ENCODE measurements at regions of chr12 and their contacts with region 1.

Region 1: GRCh38 chr12:121678716-121679580 is 9.5 kb upstream of the MORN3 start:
- DNase-seq: peak in 1 of 5 donors; percentile 55
- H3K4me3 ChIP-seq: no peak overlapping the region
- H3K27ac ChIP-seq: no peak overlapping the region
- H3K4me1 ChIP-seq: no peaks in the 10 kb centered on the region
- H3K27me3 ChIP-seq: no peaks in the 10 kb centered on the region
- CTCF ChIP-seq: no peak
- EP300 ChIP-seq: no peak
- POLR2A ChIP-seq: no peak

Region 2: GRCh38 chr12:121452340-121452984 is 226.5 kb before region 1 on chr12:
- intact Hi-C with region 1: no loop called
- DNase-seq: peak in 3 of 5 donors; percentile 35 to 52 (median 52)
- H3K4me3 ChIP-seq: peak overlapping the region; percentile 13
- H3K27ac ChIP-seq: peak overlapping the region; percentile 53 to 60
- H3K4me1 ChIP-seq: peaks cover 13% of the 10 kb centered on the region
- H3K27me3 ChIP-seq: no peaks in the 10 kb centered on the region
- CTCF ChIP-seq: no peak
- EP300 ChIP-seq: no peak
- POLR2A ChIP-seq: no peak

Region 3: DNA sequence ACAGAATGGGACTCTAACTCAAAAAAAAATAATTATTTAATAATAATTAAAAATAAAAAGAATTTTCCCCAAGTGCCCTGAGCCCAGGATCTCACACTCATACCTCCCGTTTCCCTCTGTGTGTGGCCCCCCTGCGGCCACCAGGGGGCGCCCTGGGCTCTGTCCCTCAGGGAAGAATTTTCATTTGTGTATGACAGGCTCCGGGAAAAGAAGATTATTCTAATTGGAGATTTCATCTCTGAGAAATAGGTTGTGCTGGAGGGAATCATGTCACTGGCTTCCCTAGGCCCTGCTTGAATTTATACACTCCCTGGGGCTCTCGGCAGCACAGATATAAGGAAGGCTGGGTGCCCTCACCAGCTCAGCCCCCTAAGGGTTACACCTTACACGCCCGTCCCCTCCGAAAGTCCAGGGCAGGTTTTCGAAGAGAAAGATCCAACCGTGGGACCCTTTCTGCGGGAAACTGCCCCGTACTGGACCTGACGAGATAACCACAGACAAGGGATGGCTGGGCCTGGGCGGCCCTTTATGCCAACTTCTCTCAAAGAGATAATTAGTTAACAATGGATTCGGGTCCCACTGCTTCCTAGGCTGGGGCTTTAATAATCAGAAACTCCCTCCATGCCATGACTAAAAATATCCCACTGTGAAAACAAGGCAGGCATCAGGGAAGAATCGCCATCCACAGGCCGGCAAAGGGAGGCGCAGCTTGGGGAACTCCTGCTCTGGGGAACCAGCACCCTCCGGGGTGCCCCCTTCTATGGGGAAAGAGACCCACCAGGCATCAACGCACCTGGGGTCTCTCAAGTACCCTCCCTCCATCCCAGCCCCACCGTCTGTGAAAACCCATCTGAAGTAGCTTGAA is 178.8 kb before region 1 on chr12:
- intact Hi-C with region 1: loop called (anchors 5 to 10 kb)
- DNase-seq: peak; percentile 71 to 91 (median 85)
- H3K4me3 ChIP-seq: no peak overlapping the region
- H3K27ac ChIP-seq: peak overlapping the region in 1 of 2 donors; percentile 47
- H3K4me1 ChIP-seq: no peaks in the 10 kb centered on the region
- H3K27me3 ChIP-seq: no peaks in the 10 kb centered on the region
- CTCF ChIP-seq: peak; percentile 70 to 95 (median 79)
- EP300 ChIP-seq: no peak
- POLR2A ChIP-seq: no peak

Region 4: GRCh38 chr12:121550974-121551634 is 127.8 kb before region 1 on chr12:
- intact Hi-C with region 1: loop called (anchors 2 to 5 kb)
- DNase-seq: no peak
- H3K4me3 ChIP-seq: no peak overlapping the region
- H3K27ac ChIP-seq: no peak overlapping the region
- H3K4me1 ChIP-seq: no peaks in the 10 kb centered on the region
- H3K27me3 ChIP-seq: no peaks in the 10 kb centered on the region
- CTCF ChIP-seq: no peak
- EP300 ChIP-seq: no peak
- POLR2A ChIP-seq: no peak

Region 5: DNA sequence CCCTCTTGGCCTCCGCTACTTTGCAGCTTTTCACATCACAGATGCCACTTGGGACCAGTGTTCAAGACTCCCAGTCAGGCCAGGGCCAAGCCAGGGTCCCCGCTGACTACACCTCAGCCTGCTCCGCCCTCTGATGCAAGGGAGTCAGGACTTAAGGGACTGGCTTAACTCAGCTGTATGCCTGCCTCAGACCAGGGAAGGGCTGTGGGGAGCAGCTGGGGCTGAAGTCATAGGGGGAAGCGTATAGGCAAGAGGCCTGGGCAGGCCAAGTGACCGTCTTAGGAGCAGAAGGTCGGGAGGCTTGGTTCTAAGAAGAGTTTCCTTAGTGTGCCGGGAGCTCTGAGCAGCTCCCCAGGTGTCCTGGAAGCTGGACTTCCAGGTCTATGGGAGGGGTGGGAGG is 120.0 kb before region 1 on chr12:
- intact Hi-C with region 1: loop called in 3 of 4 experiments (anchors 5 kb)
- DNase-seq: no peak
- H3K4me3 ChIP-seq: no peak overlapping the region
- H3K27ac ChIP-seq: no peak overlapping the region
- H3K4me1 ChIP-seq: no peaks in the 10 kb centered on the region
- H3K27me3 ChIP-seq: no peaks in the 10 kb centered on the region
- CTCF ChIP-seq: no peak
- EP300 ChIP-seq: no peak
- POLR2A ChIP-seq: no peak

Region 6: GRCh38 chr12:121668750-121669520 is 10.0 kb before region 1 on chr12:
- intact Hi-C with region 1: no loop called
- DNase-seq: peak in 2 of 5 donors; percentile 50 to 63
- H3K4me3 ChIP-seq: no peak overlapping the region
- H3K27ac ChIP-seq: no peak overlapping the region
- H3K4me1 ChIP-seq: no peaks in the 10 kb centered on the region
- H3K27me3 ChIP-seq: no peaks in the 10 kb centered on the region
- CTCF ChIP-seq: peak in 1 of 3 donors; percentile 22
- EP300 ChIP-seq: no peak
- POLR2A ChIP-seq: no peak

Region 7: GRCh38 chr12:121811434-121812319 is 132.7 kb after region 1 on chr12:
- intact Hi-C with region 1: no loop called
- DNase-seq: peak; percentile 77 to 87 (median 80)
- H3K4me3 ChIP-seq: peak overlapping the region; percentile 46
- H3K27ac ChIP-seq: peak overlapping the region; percentile 47 to 76
- H3K4me1 ChIP-seq: peaks cover 2% of the 10 kb centered on the region
- H3K27me3 ChIP-seq: no peaks in the 10 kb centered on the region
- CTCF ChIP-seq: peak; percentile 96 to 98 (median 98)
- EP300 ChIP-seq: no peak
- POLR2A ChIP-seq: no peak